Posterior cingulate gyrus (tissue), 11 donors: ENCODE measurements at regions of chr1 and their contacts with region 1.

Region 1: DNA sequence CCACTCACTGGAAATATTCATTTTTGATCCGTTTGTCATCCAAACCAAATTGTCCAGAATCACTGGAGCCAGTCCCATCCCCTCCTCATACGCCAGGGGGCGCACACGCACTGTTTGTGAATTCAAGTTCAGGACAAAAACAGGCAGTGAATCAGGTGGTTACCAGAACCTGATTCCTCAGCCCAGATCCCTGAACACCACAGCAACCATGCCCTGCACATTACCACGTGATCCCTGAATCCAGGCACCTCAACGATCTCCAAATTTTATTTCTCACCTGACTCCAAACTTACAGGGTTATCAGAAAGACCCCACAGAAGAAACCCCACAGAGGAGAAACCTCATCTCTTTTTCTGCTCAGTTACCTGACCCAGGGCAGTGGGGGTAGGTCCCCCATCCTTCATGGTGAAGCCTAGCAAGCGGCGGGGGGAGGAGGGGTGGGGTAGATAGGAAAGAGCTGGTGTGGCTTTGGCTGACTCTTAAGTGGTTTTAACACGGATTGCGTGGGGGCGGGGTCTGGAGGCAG is 1.4 kb upstream of the PTPRF start:
- DNase-seq: peak; percentile 60 to 97 (median 84)

Region 2: DNA sequence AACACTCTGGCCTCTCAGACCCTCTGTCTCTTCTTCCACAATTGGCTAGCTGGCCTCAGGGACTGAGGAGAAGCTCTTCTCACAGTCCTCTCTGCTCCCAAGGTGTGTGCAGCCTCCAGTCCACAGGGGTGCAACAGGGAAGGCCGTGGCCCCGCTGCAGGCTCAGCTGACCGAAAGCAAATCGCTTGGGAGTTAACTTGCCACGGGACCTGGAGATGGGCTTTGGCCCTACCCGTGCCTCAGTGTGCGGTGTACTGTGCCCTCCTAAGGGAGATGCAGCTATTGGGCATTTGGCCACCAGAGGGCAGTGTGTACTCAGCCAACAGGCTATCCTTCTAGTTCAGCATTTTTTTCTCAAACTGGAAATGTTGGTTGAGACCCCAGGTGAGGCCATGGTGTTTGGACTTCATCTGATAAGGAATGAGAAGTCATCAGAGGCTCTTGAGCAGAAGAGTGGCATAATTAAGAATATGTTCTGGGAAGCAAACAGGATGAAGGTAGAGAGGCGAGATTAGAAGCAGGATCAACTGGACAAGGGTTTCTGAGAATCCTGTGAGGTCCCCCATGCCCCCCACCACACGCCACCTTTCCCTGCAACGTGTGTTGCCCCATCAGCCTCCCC is 302.0 kb before region 1 on chr1:
- intact Hi-C with region 1: loop called (anchors 10 kb)
- DNase-seq: peak; percentile 66 to 97 (median 92)

Region 3: DNA sequence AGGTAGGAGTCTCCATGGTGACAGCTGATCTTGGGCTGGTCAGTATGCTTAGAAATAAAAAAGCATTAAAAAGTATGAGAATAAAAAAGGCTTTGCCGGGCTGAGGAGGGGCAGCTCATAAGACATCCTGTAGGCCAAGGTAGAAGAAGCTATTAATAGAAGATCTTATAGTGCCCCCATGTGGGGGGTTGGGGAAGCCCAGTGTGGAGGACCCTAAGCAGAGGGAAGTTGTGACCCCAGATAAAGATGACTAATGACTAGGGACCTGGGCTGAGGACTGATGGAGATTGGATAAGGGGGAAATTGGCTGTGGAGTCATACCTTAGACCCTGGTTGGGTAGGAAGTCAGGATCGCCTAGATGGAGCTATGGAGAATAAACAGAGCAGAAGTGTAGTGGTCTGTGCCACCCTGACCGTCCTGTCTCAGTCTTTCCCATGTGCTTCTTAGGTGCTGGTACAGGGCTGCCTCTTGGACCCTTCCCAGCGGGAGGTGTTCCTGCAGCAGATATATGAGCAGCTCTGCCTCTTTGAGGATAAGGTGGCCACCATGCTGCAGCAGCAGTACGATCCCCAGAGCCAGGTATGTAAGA is 114.5 kb before region 1 on chr1:
- intact Hi-C with region 1: no loop called
- DNase-seq: peak in 4 of 10 donors; percentile 20 to 58 (median 42)

Region 4: GRCh38 chr1:43602990-43603389 is 73.7 kb after region 1 on chr1:
- intact Hi-C with region 1: no loop called
- DNase-seq: no peak

Region 5: DNA sequence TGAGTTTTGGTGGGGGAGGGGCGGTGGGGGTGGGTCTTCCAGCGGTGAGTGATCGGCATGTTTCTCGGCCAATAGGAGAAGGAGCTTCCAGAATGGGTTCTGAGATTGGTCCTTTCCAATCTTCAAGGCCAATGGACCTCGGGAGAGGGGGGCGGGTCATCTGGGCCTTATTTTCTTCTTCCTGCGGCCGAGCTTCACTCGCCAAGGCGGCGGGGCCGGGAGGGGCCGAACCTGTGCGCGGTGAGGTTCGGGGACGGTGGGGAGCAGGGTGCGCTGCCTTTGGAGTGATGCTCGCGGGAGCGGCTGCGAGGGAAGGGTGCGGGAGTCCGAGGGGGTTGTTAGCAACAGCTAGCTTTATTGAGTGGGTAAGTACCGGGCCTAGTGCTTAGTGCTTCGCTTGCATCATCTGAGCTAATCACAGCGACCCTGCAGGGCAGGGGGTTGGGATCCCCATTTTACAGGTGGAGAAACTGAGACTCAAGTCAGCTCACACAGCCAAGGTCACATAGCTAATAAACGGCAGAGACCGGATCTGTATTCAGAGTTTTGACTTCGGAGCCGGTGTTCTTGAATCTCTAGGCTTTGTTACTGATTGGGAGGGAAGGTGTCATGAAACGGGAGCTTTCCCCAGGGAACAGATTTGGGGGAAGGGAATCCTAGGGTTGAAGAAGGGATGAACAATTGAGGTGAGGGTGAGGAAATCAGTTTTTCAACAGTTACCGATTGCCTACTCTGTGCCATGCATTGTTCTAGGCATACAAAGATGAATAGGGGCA is 121.2 kb after region 1 on chr1:
- intact Hi-C with region 1: loop called (anchors 1 kb)
- DNase-seq: peak; percentile 87 to 99 (median 93)

Region 6: DNA sequence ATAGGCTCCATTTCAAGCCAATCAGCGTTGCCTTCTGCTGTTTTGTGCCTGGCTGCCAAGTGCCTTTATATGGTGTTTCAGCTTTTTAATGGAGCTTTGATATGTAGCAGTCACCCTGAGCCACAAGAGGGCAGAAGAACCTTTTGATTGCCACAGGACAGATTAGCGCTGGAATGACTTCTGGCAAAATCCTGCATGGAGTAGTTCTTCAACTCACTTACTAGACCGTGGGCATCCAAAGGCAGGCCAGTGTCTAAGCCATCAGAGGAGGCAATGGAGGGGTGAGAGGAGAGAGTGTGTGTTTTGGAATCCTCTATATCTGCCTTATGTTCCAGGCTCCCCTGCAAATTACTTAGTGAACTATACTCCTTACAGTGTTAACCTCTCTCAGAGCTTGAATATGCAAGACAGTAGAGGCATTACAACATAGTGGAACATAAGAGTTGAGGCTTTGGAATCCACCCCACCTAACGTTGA is 234.3 kb after region 1 on chr1:
- intact Hi-C with region 1: loop called (anchors 10 kb)
- DNase-seq: peak in 7 of 10 donors; percentile 22 to 92 (median 66)

Region 7: DNA sequence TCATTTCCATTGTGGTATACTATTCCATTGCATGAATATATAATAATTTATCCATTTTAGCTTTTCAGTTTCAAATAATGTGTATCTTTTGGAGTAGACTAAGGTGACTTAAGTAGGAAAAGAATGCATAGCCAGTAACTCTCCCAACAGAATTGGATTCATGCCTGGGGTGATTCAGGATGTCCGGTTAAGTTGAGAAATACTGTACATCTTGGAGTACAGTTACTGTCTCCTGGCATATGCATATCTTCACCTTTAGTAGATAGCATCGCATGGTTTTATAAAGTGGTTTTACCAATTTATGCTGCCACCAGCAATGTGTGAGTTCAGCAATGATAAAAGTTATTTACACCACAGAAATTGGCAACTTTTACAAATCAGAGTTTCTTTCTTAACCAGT is 520.6 kb after region 1 on chr1:
- intact Hi-C with region 1: loop called (anchors 5 kb)
- DNase-seq: no peak